ENCODE measurements at regions of chr12 and their contacts with region 1.

Region 1: GRCh38 chr12:121536899-121537813 is 43.7 kb downstream of the KDM2B start:
- DNase-seq: peak; percentile 79
- ATAC-seq: peak; percentile 45
- H3K4me3 Mint-ChIP-seq: peak overlapping the region; percentile 91
- H3K27ac Mint-ChIP-seq: peak overlapping the region; percentile 93
- H3K4me1 Mint-ChIP-seq: peaks cover 64% of the 10 kb centered on the region
- H3K27me3 Mint-ChIP-seq: no peaks in the 10 kb centered on the region
- CTCF ChIP-seq: no peak

Region 2: GRCh38 chr12:121467115-121467793 is 69.9 kb before region 1 on chr12:
- CTCF ChIA-PET with region 1: no interaction called
- POLR2A ChIA-PET with region 1: interaction called, 4 read pairs
- intact Hi-C with region 1: loop called (anchors 1 kb)
- DNase-seq: peak; percentile 87
- ATAC-seq: peak; percentile 86
- H3K4me3 Mint-ChIP-seq: peak overlapping the region; percentile 41
- H3K27ac Mint-ChIP-seq: no peak overlapping the region
- H3K4me1 Mint-ChIP-seq: peaks cover 58% of the 10 kb centered on the region
- H3K27me3 Mint-ChIP-seq: no peaks in the 10 kb centered on the region
- CTCF ChIP-seq: no peak

Region 3: GRCh38 chr12:121522971-121523370 is 14.2 kb before region 1 on chr12:
- CTCF ChIA-PET with region 1: no interaction called
- POLR2A ChIA-PET with region 1: interaction called, 29 read pairs
- intact Hi-C with region 1: loop called (anchors 1 kb)
- DNase-seq: no peak
- ATAC-seq: peak; percentile 64
- H3K4me3 Mint-ChIP-seq: peak overlapping the region; percentile 77
- H3K27ac Mint-ChIP-seq: peak overlapping the region; percentile 76
- H3K4me1 Mint-ChIP-seq: peaks cover 42% of the 10 kb centered on the region
- H3K27me3 Mint-ChIP-seq: no peaks in the 10 kb centered on the region
- CTCF ChIP-seq: no peak

Region 4: GRCh38 chr12:121579981-121580868 is 43.1 kb after region 1 on chr12:
- CTCF ChIA-PET with region 1: no interaction called
- POLR2A ChIA-PET with region 1: interaction called, 72 read pairs
- intact Hi-C with region 1: loop called (anchors 1 kb)
- DNase-seq: peak; percentile 60
- ATAC-seq: peak; percentile 52
- H3K4me3 Mint-ChIP-seq: peak overlapping the region; percentile 95
- H3K27ac Mint-ChIP-seq: peak overlapping the region; percentile 95
- H3K4me1 Mint-ChIP-seq: peaks cover 45% of the 10 kb centered on the region
- H3K27me3 Mint-ChIP-seq: no peaks in the 10 kb centered on the region
- CTCF ChIP-seq: no peak

Region 5: DNA sequence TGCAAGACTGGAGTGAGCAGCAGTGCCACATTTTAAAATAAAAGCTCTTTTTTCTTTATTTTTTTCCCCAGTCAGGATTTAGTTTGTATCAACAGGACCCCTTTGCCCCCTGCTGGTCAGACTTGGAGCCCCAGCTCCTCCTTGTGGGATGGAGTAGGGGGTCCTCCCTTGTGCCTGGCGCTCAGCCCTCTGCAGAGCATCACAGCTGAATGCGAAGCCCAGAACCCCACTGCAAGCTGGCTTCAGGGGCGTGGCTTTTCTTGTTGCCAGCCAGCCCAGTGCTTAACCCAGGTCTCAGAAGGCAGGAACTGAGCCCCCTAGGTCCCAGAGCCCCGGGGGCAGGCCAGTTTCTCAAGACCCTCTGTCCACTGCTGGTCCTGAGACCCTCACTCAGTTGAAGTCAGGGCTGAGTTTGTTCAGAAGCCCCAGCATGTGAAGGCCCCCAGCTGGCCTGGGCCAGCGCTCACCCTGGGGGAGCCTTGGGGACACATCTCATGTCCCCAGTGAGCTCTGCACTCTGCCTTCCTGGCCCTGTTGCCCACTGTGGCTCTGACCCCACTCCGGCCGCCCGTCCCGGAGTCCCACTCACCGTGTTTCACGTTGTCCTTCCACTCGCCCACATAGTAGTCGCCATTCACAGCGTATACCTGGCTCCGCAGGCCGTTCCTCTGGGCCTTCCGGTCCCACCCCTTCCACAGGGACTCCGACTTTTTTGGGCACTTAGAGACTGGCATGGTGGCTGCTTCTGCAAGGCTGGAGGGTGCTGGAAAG is 131.8 kb after region 1 on chr12:
- CTCF ChIA-PET with region 1: interaction called, 3 read pairs
- POLR2A ChIA-PET with region 1: interaction called, 9 read pairs
- intact Hi-C with region 1: loop called (anchors 1 kb)
- DNase-seq: peak; percentile 38
- ATAC-seq: no peak
- H3K4me3 Mint-ChIP-seq: no peak overlapping the region
- H3K27ac Mint-ChIP-seq: peak overlapping the region; percentile 14
- H3K4me1 Mint-ChIP-seq: peaks cover 49% of the 10 kb centered on the region
- H3K27me3 Mint-ChIP-seq: no peaks in the 10 kb centered on the region
- CTCF ChIP-seq: no peak

Region 6: GRCh38 chr12:121802846-121803630 is 265.9 kb after region 1 on chr12:
- CTCF ChIA-PET with region 1: no interaction called
- POLR2A ChIA-PET with region 1: interaction called, 13 read pairs
- intact Hi-C with region 1: loop called (anchors 1 kb)
- DNase-seq: peak; percentile 91
- ATAC-seq: peak; percentile 40
- H3K4me3 Mint-ChIP-seq: peak overlapping the region; percentile 93
- H3K27ac Mint-ChIP-seq: peak overlapping the region; percentile 100
- H3K4me1 Mint-ChIP-seq: peaks cover 57% of the 10 kb centered on the region
- H3K27me3 Mint-ChIP-seq: no peaks in the 10 kb centered on the region
- CTCF ChIP-seq: no peak

Measured in activated B cell treated with CpG ODN at 0.5 μM for 24 hours (primary cell).